B cell (primary cell): ENCODE measurements at regions of chr22 and their contacts with region 1.

Region 1: DNA sequence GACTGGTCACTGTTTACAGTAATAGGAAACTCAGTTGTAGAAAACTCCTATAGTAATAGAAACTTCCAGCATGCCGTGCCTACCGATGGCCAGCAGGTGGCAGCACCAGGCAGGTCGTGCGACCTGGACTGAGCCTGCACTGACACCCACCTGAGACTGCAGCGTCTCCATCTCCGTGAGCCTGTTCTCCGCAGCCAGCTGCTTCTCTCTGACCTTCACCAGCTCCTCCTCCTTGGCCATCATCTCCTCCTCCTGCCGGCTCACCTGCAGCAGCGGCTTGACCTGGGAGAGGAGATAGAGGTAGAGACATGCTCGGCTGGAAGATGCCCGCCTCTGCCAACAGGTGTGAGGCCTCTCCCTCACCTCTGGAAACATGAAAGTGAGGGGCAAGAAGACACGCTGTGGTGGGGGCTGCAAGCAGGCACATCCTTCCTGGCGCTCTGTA is 48.5 kb downstream of the APOL1 start:
- DNase-seq: peak; percentile 85
- ATAC-seq: peak; percentile 89
- H3K4me3 ChIP-seq: no peak overlapping the region
- H3K4me3 Mint-ChIP-seq: no peak overlapping the region
- H3K27ac ChIP-seq: peak overlapping the region in 1 of 2 donors; percentile 25
- H3K27ac Mint-ChIP-seq: peak overlapping the region; percentile 68
- H3K4me1 ChIP-seq: peaks cover 0 to 4% of the 10 kb centered on the region in 2 donors
- H3K4me1 Mint-ChIP-seq: peaks cover 8% of the 10 kb centered on the region
- H3K27me3 ChIP-seq: no peaks in the 10 kb centered on the region
- H3K27me3 Mint-ChIP-seq: no peaks in the 10 kb centered on the region
- CTCF ChIP-seq: peak; percentile 97

Region 2: DNA sequence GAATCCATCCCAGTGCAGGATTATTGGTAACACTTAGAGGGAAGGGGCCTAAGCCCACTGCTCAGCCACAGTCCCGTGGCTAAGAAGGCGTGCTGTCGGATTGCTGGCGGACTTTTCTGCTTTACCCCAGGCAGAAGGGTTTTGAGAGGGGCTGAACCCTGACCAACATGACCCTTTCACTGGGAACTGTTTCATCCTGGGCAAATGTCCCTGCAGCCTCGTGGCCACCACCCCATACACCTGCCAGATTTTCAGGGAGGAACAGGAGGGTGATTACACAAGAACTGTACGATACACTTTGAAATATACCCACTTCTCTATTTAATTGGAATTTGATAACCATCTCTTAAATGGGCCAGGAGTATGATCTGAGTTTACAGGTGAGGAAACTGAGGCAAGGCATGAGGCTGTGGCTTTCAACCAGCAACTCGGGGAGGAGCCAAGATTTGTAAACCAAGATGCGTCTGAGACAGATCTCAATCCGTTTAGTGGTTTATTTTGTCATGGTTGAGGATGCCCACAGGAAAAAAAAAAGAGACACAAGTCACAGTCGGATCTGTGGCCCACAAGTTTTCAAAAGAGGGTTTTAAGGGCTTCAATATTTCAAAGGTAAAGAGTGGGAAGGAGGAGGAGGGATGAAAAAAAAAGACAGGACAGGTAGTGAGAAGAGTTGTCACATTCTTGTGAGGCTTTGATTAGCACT is 134.7 kb before region 1 on chr22:
- CTCF ChIA-PET with region 1: no interaction called
- POLR2A ChIA-PET with region 1: no interaction called
- intact Hi-C with region 1: no loop called
- DNase-seq: no peak
- ATAC-seq: no peak
- H3K4me3 ChIP-seq: no peak overlapping the region
- H3K4me3 Mint-ChIP-seq: no peak overlapping the region
- H3K27ac ChIP-seq: no peak overlapping the region
- H3K27ac Mint-ChIP-seq: no peak overlapping the region
- H3K4me1 ChIP-seq: peaks cover 21 to 37% of the 10 kb centered on the region in 2 donors
- H3K4me1 Mint-ChIP-seq: peaks cover 44% of the 10 kb centered on the region
- H3K27me3 ChIP-seq: no peaks in the 10 kb centered on the region
- H3K27me3 Mint-ChIP-seq: no peaks in the 10 kb centered on the region
- CTCF ChIP-seq: no peak

Region 3: DNA sequence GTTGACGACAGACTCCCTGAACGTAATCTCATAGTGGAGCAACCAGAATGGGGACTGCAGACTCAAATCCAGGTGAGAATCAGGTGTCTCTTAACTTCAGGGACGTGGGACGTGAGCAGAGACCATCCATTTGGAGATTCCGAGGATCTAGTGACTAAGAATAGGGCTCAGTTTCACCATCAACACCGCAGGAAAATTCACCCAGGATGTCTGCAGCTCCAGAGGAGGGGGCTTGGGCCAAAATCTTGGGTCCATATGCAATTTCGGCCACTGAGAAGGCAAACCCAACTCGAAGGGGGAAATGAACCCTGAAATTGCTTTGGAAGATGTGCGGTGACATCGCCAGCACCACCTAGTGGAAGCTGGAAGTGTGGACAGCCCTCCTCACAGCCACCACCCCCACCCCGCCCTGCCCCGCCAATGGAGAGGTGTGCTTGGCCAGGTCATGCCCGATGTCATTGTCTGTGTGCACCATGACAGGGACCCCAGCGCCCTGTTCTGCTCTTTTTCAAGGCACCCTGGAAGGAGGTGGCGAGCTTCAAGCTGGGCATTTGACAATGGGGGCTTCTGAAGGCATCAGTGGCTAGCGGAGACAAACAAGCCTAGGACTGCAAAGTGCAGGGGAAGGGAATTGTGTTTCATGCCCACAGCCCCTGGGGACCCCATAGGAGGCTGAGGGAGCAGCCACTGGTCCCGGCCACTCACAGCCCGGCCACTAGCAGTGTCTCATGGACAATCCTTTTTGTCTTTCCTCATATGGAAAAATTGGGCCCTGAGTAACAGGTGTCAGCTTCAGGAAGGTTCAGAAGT is 23.7 kb before region 1 on chr22:
- CTCF ChIA-PET with region 1: interaction called, 11 read pairs
- POLR2A ChIA-PET with region 1: no interaction called
- intact Hi-C with region 1: no loop called
- DNase-seq: peak; percentile 82
- ATAC-seq: peak; percentile 95
- H3K4me3 ChIP-seq: no peak overlapping the region
- H3K4me3 Mint-ChIP-seq: no peak overlapping the region
- H3K27ac ChIP-seq: no peak overlapping the region
- H3K27ac Mint-ChIP-seq: peak overlapping the region; percentile 38
- H3K4me1 ChIP-seq: peaks cover 9 to 13% of the 10 kb centered on the region in 2 donors
- H3K4me1 Mint-ChIP-seq: peaks cover 14% of the 10 kb centered on the region
- H3K27me3 ChIP-seq: no peaks in the 10 kb centered on the region
- H3K27me3 Mint-ChIP-seq: no peaks in the 10 kb centered on the region
- CTCF ChIP-seq: peak; percentile 87

Region 4: DNA sequence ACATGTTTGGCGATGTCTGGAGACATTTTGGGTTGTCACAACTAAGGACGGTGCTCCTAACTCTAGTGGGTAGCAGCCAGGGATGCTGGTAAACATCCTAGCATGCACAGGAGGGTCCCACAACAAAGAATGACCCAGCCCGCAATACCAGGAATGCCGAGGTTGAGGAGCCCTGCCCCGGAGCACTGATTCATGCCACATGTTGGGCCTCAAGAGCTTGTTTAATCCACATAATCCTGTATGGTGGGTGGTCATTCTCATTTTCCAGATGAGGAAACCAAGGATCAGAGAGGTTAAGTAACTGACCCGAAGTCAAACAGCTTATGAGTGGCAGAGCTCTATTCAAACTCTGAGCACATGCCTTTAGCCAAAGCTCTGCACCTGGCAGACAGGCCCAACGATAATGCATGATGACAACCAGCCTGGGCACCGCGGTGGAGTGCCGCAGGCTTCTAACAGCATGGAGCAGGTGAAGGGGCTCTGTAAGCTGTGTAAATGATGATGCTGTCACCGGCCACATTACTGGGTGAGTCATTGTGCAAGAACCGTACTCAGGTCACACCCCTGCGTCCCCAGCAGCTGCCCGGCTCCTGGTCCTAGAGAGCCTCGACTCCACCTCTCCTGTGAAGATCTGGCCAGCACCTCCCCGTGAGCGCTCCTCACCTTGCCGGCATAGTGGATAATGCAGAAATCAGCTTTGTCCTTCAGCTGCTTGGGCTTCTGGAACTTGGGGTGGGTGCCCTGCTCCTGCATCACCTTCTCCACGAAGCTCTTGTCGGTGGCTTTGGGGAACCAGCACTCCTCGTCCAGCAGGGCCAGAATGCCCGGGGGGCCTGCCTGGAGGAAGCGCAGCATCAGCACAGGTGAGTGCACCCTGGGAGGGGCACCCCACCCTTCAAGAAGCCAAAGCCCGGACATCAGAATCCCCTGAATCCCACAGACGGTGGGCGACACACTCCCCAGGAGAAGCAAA is 10.3 kb after region 1 on chr22:
- CTCF ChIA-PET with region 1: interaction called, 36 read pairs
- POLR2A ChIA-PET with region 1: no interaction called
- intact Hi-C with region 1: no loop called
- DNase-seq: no peak
- ATAC-seq: no peak
- H3K4me3 ChIP-seq: no peak overlapping the region
- H3K4me3 Mint-ChIP-seq: no peak overlapping the region
- H3K27ac ChIP-seq: no peak overlapping the region
- H3K27ac Mint-ChIP-seq: no peak overlapping the region
- H3K4me1 ChIP-seq: no peaks in the 10 kb centered on the region
- H3K4me1 Mint-ChIP-seq: peaks cover 2% of the 10 kb centered on the region
- H3K27me3 ChIP-seq: no peaks in the 10 kb centered on the region
- H3K27me3 Mint-ChIP-seq: no peaks in the 10 kb centered on the region
- CTCF ChIP-seq: no peak

Region 5: GRCh38 chr22:36331306-36331911 is 30.0 kb after region 1 on chr22:
- CTCF ChIA-PET with region 1: interaction called, 35 read pairs
- POLR2A ChIA-PET with region 1: interaction called, 5 read pairs
- intact Hi-C with region 1: loop called (anchors 1 kb)
- DNase-seq: peak; percentile 87
- ATAC-seq: peak; percentile 66
- H3K4me3 ChIP-seq: peak overlapping the region in 4 of 5 experiments; percentile 14 to 58 (median 30)
- H3K4me3 Mint-ChIP-seq: peak overlapping the region; percentile 84
- H3K27ac ChIP-seq: peak overlapping the region; percentile 83 to 86
- H3K27ac Mint-ChIP-seq: peak overlapping the region; percentile 97
- H3K4me1 ChIP-seq: peaks cover 78 to 90% of the 10 kb centered on the region in 2 donors
- H3K4me1 Mint-ChIP-seq: peaks cover 89% of the 10 kb centered on the region
- H3K27me3 ChIP-seq: no peaks in the 10 kb centered on the region
- H3K27me3 Mint-ChIP-seq: no peaks in the 10 kb centered on the region
- CTCF ChIP-seq: no peak

Region 6: DNA sequence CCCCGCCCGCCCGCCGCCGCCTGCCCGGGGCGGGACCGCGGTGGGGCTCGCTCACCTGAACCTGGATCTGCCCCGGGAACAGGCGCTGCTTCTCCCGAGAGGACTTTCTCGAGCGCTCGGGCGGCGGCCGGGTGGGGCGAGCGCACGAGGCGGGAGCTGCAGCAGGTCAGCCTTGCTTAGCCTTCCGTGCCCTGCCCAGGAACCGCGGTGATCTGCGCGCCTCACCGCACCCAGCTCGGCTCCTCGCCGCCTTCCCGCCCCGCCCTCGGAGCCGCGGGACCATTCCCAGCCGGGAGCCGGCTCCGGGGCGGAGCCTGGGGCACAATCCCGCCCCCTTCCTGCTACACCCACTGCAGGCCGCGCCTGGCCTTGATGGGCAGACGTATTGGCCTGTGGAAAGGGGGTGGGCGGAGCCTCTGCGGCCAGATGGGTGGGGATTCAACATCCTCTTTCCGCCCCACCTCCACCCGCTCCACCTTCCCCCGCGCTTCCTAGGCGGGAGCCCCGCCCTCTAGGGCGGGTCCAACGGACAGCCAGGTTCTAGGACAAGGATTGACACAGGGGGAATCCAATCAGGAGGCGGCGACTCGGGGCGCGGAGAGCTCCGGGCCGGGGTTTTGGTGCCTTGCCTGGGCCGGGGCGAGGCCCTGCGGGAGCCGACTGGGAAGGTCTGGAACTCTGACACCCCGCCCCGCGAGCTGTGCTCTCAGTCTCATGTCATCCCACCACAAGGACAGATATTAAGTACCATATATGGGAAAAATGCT is 86.5 kb after region 1 on chr22 and contains the start of gene MYH9:
- CTCF ChIA-PET with region 1: interaction called, 20 read pairs
- POLR2A ChIA-PET with region 1: no interaction called
- intact Hi-C with region 1: no loop called
- DNase-seq: peak; percentile 99
- ATAC-seq: peak; percentile 81
- H3K4me3 ChIP-seq: peak within 1 kb of the TSS; percentile 67 to 95 (median 87)
- H3K4me3 Mint-ChIP-seq: peak within 1 kb of the TSS; percentile 98
- H3K27ac ChIP-seq: peak within 1 kb of the TSS; percentile 79 to 93
- H3K27ac Mint-ChIP-seq: peak within 1 kb of the TSS; percentile 92
- H3K4me1 ChIP-seq: peaks cover 57 to 70% of the 10 kb centered on the region in 2 donors
- H3K4me1 Mint-ChIP-seq: peaks cover 54% of the 10 kb centered on the region
- H3K27me3 ChIP-seq: no peaks in the 10 kb centered on the region
- H3K27me3 Mint-ChIP-seq: no peaks in the 10 kb centered on the region
- CTCF ChIP-seq: no peak
- total RNA-seq, gene MYH9: 552 and 554 TPM in 2 replicates

Region 7: GRCh38 chr22:36454916-36455570 is 153.6 kb after region 1 on chr22:
- CTCF ChIA-PET with region 1: interaction called, 10 read pairs
- POLR2A ChIA-PET with region 1: no interaction called
- intact Hi-C with region 1: no loop called
- DNase-seq: peak; percentile 96
- ATAC-seq: peak; percentile 62
- H3K4me3 ChIP-seq: peak overlapping the region; percentile 18 to 59 (median 54)
- H3K4me3 Mint-ChIP-seq: peak overlapping the region; percentile 77
- H3K27ac ChIP-seq: peak overlapping the region; percentile 84 to 93
- H3K27ac Mint-ChIP-seq: peak overlapping the region; percentile 91
- H3K4me1 ChIP-seq: peaks cover 50 to 60% of the 10 kb centered on the region in 2 donors
- H3K4me1 Mint-ChIP-seq: peaks cover 45% of the 10 kb centered on the region
- H3K27me3 ChIP-seq: no peaks in the 10 kb centered on the region
- H3K27me3 Mint-ChIP-seq: no peaks in the 10 kb centered on the region
- CTCF ChIP-seq: no peak

Region 8: DNA sequence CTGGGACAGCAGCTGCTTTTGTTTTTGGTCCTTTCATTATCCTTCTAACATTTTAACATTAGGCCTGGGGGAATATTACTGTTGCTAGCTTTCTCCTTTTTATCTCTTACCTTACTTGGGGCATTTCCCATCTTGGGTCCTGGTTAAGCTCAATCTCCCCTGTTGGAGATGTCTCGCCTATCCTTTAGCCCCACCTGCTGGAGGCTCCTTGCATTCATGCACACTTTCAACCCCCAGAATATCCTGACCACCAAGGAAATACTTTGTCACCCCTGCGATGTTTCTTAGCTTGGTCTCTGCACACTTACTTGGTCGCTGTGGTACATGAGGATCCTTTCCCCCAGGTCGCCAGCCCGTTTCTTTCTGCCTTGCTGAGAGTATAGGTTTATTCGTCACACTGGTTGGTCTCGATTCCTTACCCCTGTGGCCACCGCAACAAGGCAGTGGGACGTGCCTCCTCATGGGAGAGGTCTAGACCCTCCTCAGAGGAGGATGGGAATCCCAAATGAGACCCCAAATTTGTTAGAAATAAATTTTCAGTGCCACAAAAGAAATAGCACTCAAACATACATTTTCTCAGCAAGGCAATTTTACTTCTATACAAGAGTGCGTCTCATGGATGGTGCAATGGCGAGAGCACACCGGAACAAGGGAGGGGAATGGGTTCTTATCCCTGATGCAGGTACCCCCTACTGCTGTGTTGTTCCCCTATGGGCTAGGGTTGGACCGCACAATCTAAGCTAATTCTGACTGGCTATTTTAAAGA is 185.4 kb after region 1 on chr22:
- CTCF ChIA-PET with region 1: interaction called, 607 read pairs
- POLR2A ChIA-PET with region 1: interaction called, 7 read pairs
- intact Hi-C with region 1: loop called (anchors 1 kb)
- DNase-seq: peak; percentile 77
- ATAC-seq: no peak
- H3K4me3 ChIP-seq: no peak overlapping the region
- H3K4me3 Mint-ChIP-seq: no peak overlapping the region
- H3K27ac ChIP-seq: no peak overlapping the region
- H3K27ac Mint-ChIP-seq: peak overlapping the region; percentile 38
- H3K4me1 ChIP-seq: peaks cover 11 to 14% of the 10 kb centered on the region in 2 donors
- H3K4me1 Mint-ChIP-seq: peaks cover 12% of the 10 kb centered on the region
- H3K27me3 ChIP-seq: no peaks in the 10 kb centered on the region
- H3K27me3 Mint-ChIP-seq: no peaks in the 10 kb centered on the region
- CTCF ChIP-seq: peak; percentile 74